ENCODE measurements at regions of chr4 and their contacts with region 1.

Region 1: DNA sequence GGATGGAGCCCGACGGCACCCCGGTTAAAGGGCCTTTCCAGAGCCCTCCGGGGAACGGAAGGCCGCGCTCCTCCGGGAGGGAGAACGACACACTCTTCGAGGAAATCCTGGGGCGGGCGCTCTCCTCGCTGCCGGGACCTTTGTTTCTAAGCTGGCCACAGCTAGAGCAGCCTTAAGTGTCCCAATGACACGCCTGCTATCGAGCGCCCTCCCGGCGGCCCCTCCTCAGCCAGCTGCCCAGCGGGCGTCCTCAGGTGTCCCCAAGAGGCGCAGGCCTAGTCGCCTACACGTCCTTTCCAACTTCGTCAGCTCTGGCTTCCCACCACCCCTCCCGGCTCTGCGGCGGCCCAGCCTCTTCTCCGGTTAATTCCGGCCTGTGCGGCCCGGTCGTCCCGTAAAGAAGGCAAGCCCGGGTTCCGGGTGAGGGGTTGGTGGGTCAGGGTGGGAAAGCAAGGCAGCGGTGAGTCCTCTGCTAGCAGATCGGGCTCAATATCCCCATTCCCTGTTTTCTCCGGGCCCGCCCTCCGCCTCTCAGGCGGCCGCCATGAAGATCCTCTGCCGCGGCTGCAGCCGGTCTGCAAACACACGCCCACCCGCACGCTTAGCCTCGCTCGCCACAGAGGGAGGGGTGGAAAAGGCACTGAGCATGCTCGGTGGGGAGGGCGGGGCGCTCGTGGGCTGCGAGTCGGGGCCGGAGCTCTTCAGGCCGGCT is 449 bp upstream of the RAP1GDS1 start:
- DNase-seq: peak; percentile 92
- H3K4me3 Mint-ChIP-seq: peak overlapping the region; percentile 94
- H3K27ac Mint-ChIP-seq: peak overlapping the region; percentile 97
- H3K4me1 Mint-ChIP-seq: peaks cover 50% of the 10 kb centered on the region
- H3K27me3 Mint-ChIP-seq: no peaks in the 10 kb centered on the region

Region 2: GRCh38 chr4:98203332-98204235 is 57.2 kb before region 1 on chr4:
- CTCF ChIA-PET with region 1: no interaction called
- POLR2A ChIA-PET with region 1: interaction called, 12 read pairs
- DNase-seq: no peak
- H3K4me3 Mint-ChIP-seq: peak overlapping the region; percentile 2
- H3K27ac Mint-ChIP-seq: peak overlapping the region; percentile 78
- H3K4me1 Mint-ChIP-seq: peaks cover 13% of the 10 kb centered on the region
- H3K27me3 Mint-ChIP-seq: no peaks in the 10 kb centered on the region

Region 3: GRCh38 chr4:98242538-98242937 is 18.2 kb before region 1 on chr4:
- CTCF ChIA-PET with region 1: no interaction called
- POLR2A ChIA-PET with region 1: no interaction called
- DNase-seq: no peak
- H3K4me3 Mint-ChIP-seq: no peak overlapping the region
- H3K27ac Mint-ChIP-seq: no peak overlapping the region
- H3K4me1 Mint-ChIP-seq: no peaks in the 10 kb centered on the region
- H3K27me3 Mint-ChIP-seq: peaks cover 15% of the 10 kb centered on the region

Region 4: GRCh38 chr4:98275145-98275544 is 14.4 kb after region 1 on chr4:
- CTCF ChIA-PET with region 1: interaction called, 10 read pairs
- POLR2A ChIA-PET with region 1: no interaction called
- DNase-seq: no peak
- H3K4me3 Mint-ChIP-seq: no peak overlapping the region
- H3K27ac Mint-ChIP-seq: no peak overlapping the region
- H3K4me1 Mint-ChIP-seq: peaks cover 12% of the 10 kb centered on the region
- H3K27me3 Mint-ChIP-seq: no peaks in the 10 kb centered on the region

Region 5: GRCh38 chr4:98318521-98318920 is 57.8 kb after region 1 on chr4:
- CTCF ChIA-PET with region 1: no interaction called
- POLR2A ChIA-PET with region 1: no interaction called
- DNase-seq: no peak
- H3K4me3 Mint-ChIP-seq: no peak overlapping the region
- H3K27ac Mint-ChIP-seq: no peak overlapping the region
- H3K4me1 Mint-ChIP-seq: no peaks in the 10 kb centered on the region
- H3K27me3 Mint-ChIP-seq: no peaks in the 10 kb centered on the region